ENCODE measurements at regions of chr15 and their contacts with region 1.

Region 1: GRCh38 chr15:101024073-101024695 is 105.0 kb downstream of the LRRK1 start:
- DNase-seq: peak; percentile 68
- H3K4me3 ChIP-seq: no peak overlapping the region
- H3K27ac ChIP-seq: peak overlapping the region; percentile 51
- H3K27me3 ChIP-seq: no peaks in the 10 kb centered on the region
- CTCF ChIP-seq: no peak

Region 2: GRCh38 chr15:100863796-100864267 is 160.4 kb before region 1 on chr15:
- in situ Hi-C with region 1: no loop called
- DNase-seq: no peak
- H3K4me3 ChIP-seq: no peak overlapping the region
- H3K27ac ChIP-seq: no peak overlapping the region
- H3K27me3 ChIP-seq: no peaks in the 10 kb centered on the region
- CTCF ChIP-seq: no peak

Region 3: GRCh38 chr15:101251830-101252820 is 227.9 kb after region 1 on chr15 and contains the start of gene CHSY1:
- in situ Hi-C with region 1: loop called (anchors 10 kb)
- DNase-seq: peak; percentile 86
- H3K4me3 ChIP-seq: peak within 1 kb of the TSS; percentile 82
- H3K27ac ChIP-seq: peak within 1 kb of the TSS; percentile 84
- H3K27me3 ChIP-seq: no peaks in the 10 kb centered on the region
- CTCF ChIP-seq: no peak

Region 4: DNA sequence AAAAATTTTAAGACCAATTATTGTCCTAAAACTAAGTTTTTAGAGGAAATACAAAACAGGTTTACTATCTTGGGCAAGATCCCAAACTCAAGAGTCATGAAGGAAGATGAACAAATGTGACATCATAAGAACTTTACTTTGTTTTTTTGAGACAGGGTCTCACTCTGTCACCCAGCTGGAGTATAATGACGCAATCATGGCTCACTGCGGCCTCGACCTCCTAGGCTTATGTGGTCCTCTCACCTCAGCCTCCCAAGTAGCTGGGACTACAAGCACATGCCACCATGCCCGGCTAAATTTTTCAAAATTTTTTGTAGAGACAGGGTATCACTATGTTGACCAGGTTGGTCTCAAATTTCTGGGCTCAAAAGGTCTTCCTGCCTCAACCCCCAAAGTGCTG is 396.0 kb after region 1 on chr15:
- in situ Hi-C with region 1: no loop called
- DNase-seq: no peak
- H3K4me3 ChIP-seq: no peak overlapping the region
- H3K27ac ChIP-seq: no peak overlapping the region
- H3K27me3 ChIP-seq: no peaks in the 10 kb centered on the region
- CTCF ChIP-seq: no peak

Measured in brain microvascular endothelial cell (primary cell).